Left ventricle myocardium superior (tissue), 1 donor: ENCODE measurements at regions of chr1 and their contacts with region 1.

Region 1: GRCh38 chr1:183915625-183916510 is 110.9 kb downstream of the RGL1 start:
- DNase-seq: peak; percentile 52
- ATAC-seq: peak; percentile 79

Region 2: GRCh38 chr1:183652547-183653461 is 263.1 kb before region 1 on chr1 and contains the start of gene APOBEC4:
- intact Hi-C with region 1: loop called (anchors 5 kb)
- DNase-seq: no peak
- ATAC-seq: peak; percentile 77
- total RNA-seq, gene APOBEC4: not detected